ENCODE measurements at regions of chr1 and their contacts with region 1.

Region 1: DNA sequence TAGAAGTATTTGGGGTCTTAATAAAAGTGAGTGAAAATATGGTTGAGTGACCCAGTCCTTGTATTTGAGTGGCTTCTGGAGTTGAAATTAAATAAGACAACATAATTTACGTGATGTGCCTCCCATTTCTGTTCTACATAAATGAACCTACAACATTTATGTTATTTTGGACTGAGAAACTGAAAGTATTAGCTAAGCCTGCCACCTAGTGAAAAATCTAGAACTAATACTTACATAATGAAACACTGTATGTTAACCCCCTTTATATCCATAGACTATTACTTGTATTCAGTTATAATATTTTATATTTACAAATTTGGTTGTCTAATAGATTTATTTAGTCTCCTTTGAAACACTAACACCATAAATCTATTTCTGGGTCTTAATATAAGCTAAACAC is 298.9 kb downstream of the KCNT2 start:
- DNase-seq: no peak
- H3K4me3 ChIP-seq: no peak overlapping the region
- H3K4me3 Mint-ChIP-seq: no peak overlapping the region
- H3K27ac Mint-ChIP-seq: no peak overlapping the region
- H3K4me1 ChIP-seq: no peaks in the 10 kb centered on the region
- H3K4me1 Mint-ChIP-seq: no peaks in the 10 kb centered on the region
- H3K27me3 ChIP-seq: no peaks in the 10 kb centered on the region
- H3K27me3 Mint-ChIP-seq: peaks cover 3% of the 10 kb centered on the region
- CTCF ChIP-seq: peak in 1 of 2 experiments; percentile 11

Region 2: DNA sequence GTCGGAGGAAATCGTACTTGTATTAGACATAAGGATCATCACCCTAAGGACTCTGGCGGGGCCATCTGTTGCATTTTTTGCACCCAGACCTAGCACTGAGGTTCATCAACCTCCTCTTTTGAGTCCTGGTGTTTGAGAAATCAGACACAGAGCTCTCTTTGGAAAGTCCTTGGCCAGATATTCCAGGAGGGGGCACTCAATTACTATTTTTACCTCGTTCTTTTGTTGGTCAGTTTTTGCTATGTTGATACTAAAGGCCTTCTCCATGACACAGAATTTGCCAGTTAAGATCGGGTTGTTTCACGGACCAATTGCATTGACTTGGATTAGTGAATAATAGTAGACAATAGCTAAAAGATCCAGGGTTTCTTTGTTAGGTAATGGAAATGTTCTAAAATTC is 412.3 kb before region 1 on chr1:
- CTCF ChIA-PET with region 1: no interaction called
- POLR2A ChIA-PET with region 1: no interaction called
- intact Hi-C with region 1: loop called (anchors 2 kb)
- DNase-seq: no peak
- H3K4me3 ChIP-seq: no peak overlapping the region
- H3K4me3 Mint-ChIP-seq: no peak overlapping the region
- H3K27ac Mint-ChIP-seq: no peak overlapping the region
- H3K4me1 ChIP-seq: no peaks in the 10 kb centered on the region
- H3K4me1 Mint-ChIP-seq: no peaks in the 10 kb centered on the region
- H3K27me3 ChIP-seq: no peaks in the 10 kb centered on the region
- H3K27me3 Mint-ChIP-seq: no peaks in the 10 kb centered on the region
- CTCF ChIP-seq: no peak

Region 3: GRCh38 chr1:195999022-195999421 is 310.4 kb before region 1 on chr1:
- CTCF ChIA-PET with region 1: no interaction called
- POLR2A ChIA-PET with region 1: no interaction called
- intact Hi-C with region 1: no loop called
- DNase-seq: no peak
- H3K4me3 ChIP-seq: no peak overlapping the region
- H3K4me3 Mint-ChIP-seq: no peak overlapping the region
- H3K27ac Mint-ChIP-seq: no peak overlapping the region
- H3K4me1 ChIP-seq: no peaks in the 10 kb centered on the region
- H3K4me1 Mint-ChIP-seq: no peaks in the 10 kb centered on the region
- H3K27me3 ChIP-seq: no peaks in the 10 kb centered on the region
- H3K27me3 Mint-ChIP-seq: no peaks in the 10 kb centered on the region
- CTCF ChIP-seq: no peak

Region 4: GRCh38 chr1:196148367-196148970 is 160.9 kb before region 1 on chr1:
- CTCF ChIA-PET with region 1: interaction called, 5 read pairs
- POLR2A ChIA-PET with region 1: no interaction called
- intact Hi-C with region 1: loop called (anchors 1 kb)
- DNase-seq: peak in 1 of 2 experiments; percentile 5
- H3K4me3 ChIP-seq: no peak overlapping the region
- H3K4me3 Mint-ChIP-seq: no peak overlapping the region
- H3K27ac Mint-ChIP-seq: no peak overlapping the region
- H3K4me1 ChIP-seq: no peaks in the 10 kb centered on the region
- H3K4me1 Mint-ChIP-seq: no peaks in the 10 kb centered on the region
- H3K27me3 ChIP-seq: no peaks in the 10 kb centered on the region
- H3K27me3 Mint-ChIP-seq: no peaks in the 10 kb centered on the region
- CTCF ChIP-seq: peak; percentile 33 to 43

Region 5: GRCh38 chr1:196324345-196324744 is 15.0 kb after region 1 on chr1:
- CTCF ChIA-PET with region 1: no interaction called
- POLR2A ChIA-PET with region 1: no interaction called
- intact Hi-C with region 1: no loop called
- DNase-seq: no peak
- H3K4me3 ChIP-seq: no peak overlapping the region
- H3K4me3 Mint-ChIP-seq: no peak overlapping the region
- H3K27ac Mint-ChIP-seq: no peak overlapping the region
- H3K4me1 ChIP-seq: no peaks in the 10 kb centered on the region
- H3K4me1 Mint-ChIP-seq: no peaks in the 10 kb centered on the region
- H3K27me3 ChIP-seq: no peaks in the 10 kb centered on the region
- H3K27me3 Mint-ChIP-seq: no peaks in the 10 kb centered on the region
- CTCF ChIP-seq: no peak

Region 6: DNA sequence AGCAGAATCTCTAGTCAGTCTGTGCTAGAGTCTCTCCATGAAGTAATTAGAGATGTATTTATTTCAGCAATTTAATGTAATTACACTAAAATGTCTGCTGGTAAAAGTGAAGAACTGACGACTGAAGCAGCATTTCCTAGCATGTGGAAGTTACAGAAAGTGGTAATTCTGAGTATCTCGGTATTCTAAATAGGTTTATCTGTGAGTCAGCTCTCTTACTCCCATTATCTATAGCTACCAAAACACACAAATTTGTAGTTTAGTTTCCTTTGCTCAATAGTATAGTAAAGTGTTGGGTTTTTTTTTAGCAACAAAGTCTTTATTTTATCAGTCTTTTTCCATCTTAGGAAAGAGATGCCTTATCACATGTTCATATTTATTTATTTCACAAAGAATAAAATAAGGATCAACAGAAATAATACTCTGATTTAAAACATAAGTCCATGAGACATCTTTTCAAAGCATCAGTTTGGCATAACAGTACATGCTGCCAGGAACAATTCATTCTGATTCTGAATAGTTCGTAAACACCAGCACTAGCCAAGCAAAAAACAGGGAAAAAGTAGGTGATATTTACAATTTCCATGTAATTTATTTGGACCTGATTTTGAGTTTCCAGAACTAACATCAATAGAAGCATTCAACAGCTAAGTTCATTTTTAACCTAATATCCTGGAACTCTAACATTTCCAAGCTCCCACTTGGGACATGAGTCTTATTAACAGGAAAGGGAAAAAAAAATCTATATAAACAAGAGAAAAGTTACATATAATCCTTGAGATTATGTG is 222.5 kb after region 1 on chr1:
- CTCF ChIA-PET with region 1: no interaction called
- POLR2A ChIA-PET with region 1: no interaction called
- intact Hi-C with region 1: no loop called
- DNase-seq: no peak
- H3K4me3 ChIP-seq: no peak overlapping the region
- H3K4me3 Mint-ChIP-seq: no peak overlapping the region
- H3K27ac Mint-ChIP-seq: no peak overlapping the region
- H3K4me1 ChIP-seq: no peaks in the 10 kb centered on the region
- H3K4me1 Mint-ChIP-seq: no peaks in the 10 kb centered on the region
- H3K27me3 ChIP-seq: no peaks in the 10 kb centered on the region
- H3K27me3 Mint-ChIP-seq: no peaks in the 10 kb centered on the region
- CTCF ChIP-seq: no peak